T-cell (primary cell): ENCODE measurements at regions of chr3 and their contacts with region 1.

Region 1: DNA sequence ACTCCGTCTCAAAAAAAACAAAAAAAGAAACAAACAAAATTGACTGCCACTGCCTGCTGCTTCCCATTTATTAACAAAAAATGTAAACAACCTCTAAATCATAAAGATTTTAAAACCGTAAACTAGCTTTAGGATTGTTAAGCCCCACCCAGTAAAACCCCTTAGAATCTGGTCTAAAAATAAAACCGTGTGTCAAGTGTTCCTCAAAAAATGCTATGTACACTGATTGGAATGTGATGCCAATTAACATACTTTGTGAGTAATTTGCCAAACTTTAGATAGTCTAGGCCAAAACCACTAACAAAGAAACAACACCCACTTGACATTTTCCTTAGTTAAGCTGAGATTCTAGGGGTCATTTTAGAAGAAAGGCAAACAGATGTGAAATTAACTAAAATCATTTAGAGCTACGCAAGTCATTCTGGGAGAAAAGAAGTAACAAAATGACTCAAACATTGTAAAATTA is 5.3 kb downstream of the RAF1 start:
- DNase-seq: no peak
- ATAC-seq: no peak
- H3K4me3 ChIP-seq: no peak overlapping the region
- H3K4me3 Mint-ChIP-seq: peak overlapping the region in 1 of 3 donors; percentile 26
- H3K27ac ChIP-seq: no peak overlapping the region
- H3K27ac Mint-ChIP-seq: no peak overlapping the region
- H3K4me1 ChIP-seq: peaks cover 15 to 39% of the 10 kb centered on the region in 2 experiments
- H3K4me1 Mint-ChIP-seq: peaks cover 66 to 70% (median 68%) of the 10 kb centered on the region in 3 donors
- H3K27me3 ChIP-seq: no peaks in the 10 kb centered on the region
- H3K27me3 Mint-ChIP-seq: no peaks in the 10 kb centered on the region

Region 2: DNA sequence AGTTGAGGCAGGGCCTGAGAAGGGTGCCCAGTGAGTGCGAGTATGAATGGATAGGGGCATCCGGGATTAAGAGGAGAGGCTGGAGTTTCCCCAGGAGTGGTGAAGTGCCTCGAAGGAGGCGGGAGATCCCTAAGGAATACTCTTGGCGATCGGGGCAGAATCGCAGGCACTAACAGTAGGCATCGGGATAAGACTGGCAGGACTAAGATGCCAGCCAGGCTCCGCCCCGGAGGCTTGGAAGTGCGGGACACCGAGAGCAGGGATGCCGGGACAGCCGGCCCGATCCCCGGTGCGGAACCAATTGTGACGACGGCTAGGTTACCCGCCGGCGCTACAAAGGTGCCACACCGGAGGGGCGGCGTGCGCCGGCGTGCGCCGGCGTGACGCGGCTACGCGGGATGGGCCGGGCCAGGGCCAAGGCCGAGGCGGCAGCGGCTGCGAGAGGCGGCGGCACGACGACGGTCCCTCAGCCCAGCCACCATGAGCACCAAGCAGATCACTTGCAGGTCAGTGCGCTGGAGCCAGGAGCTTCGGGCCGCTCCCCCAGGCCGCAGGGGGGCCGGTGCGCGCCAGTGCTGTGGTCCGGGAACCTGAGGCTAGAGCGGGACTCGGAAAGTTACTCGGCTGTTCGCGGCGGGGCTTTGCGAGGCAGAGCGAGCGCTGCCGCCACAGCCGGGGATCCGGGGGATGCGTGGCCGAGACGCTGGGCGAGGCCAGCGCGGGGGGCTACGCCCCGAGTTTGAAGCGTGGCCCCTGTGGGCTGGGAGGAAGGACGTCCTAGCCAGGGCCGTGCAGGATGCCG is 101.8 kb before region 1 on chr3 and contains the start of gene MKRN2:
- CTCF ChIA-PET with region 1: no interaction called
- POLR2A ChIA-PET with region 1: interaction called in 1 of 2 experiments, 10 read pairs
- DNase-seq: peak; percentile 62 to 91 (median 79)
- ATAC-seq: peak; percentile 97 to 99 (median 98)
- H3K4me3 ChIP-seq: peak within 1 kb of the TSS; percentile 83 to 88
- H3K4me3 Mint-ChIP-seq: peak within 1 kb of the TSS; percentile 81 to 95 (median 90)
- H3K27ac ChIP-seq: peak within 1 kb of the TSS; percentile 88
- H3K27ac Mint-ChIP-seq: peak within 1 kb of the TSS; percentile 88 to 89
- H3K4me1 ChIP-seq: peaks cover 20 to 21% of the 10 kb centered on the region in 2 experiments
- H3K4me1 Mint-ChIP-seq: peaks cover 55 to 65% (median 58%) of the 10 kb centered on the region in 3 donors
- H3K27me3 ChIP-seq: peaks cover 0 to 33% of the 10 kb centered on the region in 2 experiments
- H3K27me3 Mint-ChIP-seq: peaks cover 24 to 34% of the 10 kb centered on the region in 2 donors
- total RNA-seq, gene MKRN2: 22.2 to 31.7 (median 27.5) TPM